Head of caudate nucleus (tissue), 42 donors: ENCODE measurements at regions of chr10 and their contacts with region 1.

Region 1: DNA sequence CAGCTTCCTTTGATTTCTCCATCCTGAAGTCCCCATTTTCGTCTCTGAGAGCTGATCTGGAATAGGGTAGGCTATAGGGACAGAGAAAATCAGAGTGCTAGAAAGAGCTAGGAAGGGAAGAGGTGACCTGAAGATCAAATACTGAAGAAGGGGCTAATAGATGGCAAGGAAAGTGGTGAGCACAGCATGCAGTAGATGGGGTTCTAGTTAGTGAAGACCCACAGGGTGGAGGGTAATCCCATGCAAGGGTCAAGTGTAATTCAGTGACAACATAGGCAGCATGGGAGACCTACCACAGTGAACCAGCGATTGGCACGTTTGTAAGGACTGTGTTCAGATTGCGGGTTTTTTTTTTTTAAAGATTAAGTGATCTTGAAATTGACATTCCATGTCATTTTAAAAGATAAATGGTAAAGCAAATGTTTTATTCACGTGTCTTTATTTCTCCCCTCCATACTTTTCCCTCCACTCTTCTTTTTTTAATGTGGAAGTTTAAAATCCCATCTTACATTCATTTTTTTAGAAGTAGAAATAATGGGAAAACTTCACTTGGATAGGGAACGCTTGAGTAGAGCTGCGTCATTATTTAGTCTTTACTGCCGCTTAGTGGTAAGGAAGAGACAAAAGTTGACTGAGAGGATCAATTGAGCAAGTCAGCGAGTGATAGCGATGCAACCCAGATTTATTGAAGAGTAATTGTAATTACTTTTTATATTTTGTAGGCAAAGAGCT is 21.0 kb upstream of the ABI1 start:
- DNase-seq: peak in 8 of 42 donors; percentile 30 to 66 (median 39)

Region 2: GRCh38 chr10:26725837-26726727 is 155.7 kb before region 1 on chr10:
- intact Hi-C with region 1: loop called (anchors 5 kb)
- DNase-seq: peak; percentile 24 to 88 (median 76)

Region 3: DNA sequence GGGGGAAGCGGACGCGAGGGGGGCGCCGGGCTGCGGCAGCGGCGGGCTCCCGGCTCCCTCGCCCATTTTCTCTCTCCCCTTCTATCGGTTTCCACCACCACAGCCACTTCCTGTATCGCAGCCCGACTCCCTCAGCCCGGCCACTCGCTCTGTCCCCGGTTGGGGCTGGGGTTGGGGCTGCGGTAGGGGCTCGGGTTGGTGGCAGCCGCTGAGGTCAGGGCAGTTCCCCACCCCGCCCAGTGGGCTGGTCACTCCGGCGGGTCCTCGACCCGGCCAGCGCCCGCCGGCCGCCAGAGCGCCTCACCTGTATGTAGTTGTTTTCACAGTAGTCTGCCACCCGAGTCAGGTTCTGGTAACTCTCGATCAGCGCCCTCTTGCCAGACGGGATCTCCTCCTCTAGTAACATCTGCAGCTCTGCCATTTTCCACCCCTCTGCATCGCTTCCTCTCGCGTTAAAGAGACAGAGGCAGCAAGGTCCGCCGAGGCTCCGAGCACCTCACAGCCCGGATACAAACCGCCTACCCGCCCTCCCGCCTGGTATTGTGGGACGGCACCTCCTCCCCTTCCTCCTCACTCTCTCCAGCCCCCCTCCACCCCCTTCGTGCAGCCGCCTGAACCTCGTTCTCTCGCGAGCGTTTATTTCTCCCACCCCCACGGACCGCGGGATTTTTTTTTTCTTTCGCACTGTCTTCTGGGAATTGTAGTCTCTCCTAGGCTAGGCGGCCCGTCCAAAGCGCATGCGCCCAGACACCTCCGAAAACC is 21.1 kb before region 1 on chr10 and contains the start of gene ABI1:
- intact Hi-C with region 1: loop called (anchors 2 kb)
- DNase-seq: peak; percentile 90 to 99 (median 97)

Region 4: DNA sequence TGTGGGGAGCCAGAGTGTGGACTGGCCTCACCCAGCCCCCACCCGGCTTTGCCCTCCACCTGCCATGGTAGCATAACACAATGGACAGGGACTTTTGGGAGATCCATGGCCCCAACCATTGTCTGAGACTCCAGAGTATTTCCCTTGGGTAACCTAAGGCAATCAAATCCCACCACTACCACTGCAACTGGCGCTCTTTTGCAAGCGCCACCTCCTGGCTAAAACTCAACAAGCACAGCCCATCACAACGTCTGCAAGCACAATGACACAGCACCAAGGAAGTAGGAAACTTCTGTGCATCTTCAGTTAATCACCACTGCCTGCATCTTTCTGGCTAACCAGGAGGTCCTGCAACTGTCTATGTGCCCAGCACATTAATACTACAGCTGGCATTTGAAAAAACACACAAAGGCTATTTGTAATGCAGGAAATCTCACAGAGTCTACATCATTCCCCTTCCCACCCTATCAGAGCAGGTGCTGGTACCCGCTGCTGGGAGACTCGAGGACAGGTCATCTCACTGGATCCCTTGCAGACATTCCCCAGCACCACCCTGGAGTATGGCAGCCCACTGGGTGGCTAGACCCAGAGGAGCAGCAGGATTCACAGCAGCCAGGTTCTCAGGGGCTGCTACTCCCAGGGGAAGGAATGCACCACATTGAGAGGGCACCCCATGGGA is 190.8 kb after region 1 on chr10:
- intact Hi-C with region 1: no loop called
- DNase-seq: no peak